GM12878 (cell line): ENCODE measurements at regions of chr14 and their contacts with region 1.

Region 1: DNA sequence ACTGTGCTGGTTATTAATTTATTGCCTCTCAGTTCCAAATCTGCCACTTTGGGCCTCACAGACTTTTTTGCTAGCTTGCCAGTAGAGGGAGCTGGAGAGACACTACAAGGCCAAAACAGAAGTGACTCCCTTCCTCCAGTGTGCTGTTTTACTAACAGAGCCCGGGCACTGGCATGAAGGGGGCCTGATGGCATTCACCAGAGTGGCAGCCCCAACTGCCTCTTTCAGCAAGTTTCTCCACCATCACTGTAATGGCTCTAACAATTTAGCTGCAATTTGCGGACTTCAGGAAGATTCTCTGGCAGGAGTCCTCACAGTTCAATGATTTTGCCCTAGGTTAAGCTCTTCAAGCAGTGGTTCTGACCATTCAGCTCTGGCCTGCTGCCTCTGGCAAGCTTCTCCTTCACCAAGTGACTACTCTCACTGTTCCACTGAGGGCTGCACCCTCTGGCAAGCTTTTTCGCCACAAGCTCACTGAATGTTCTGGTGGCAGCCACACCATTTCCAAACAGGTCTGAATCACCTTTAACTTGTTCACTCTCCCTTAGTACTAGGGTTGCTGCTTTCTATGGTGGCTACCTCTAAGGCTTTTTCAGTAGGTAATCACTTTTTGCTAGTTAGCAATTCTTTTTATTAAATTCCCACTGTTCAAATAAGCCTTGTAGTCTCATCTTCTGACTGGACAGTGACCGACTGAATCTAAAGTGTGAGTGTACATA is 104.9 kb downstream of the ZC3H14 start:
- DNase-seq: peak; percentile 25
- ATAC-seq: peak; percentile 89
- H3K4me3 ChIP-seq: peak overlapping the region; percentile 16; the same call in 1 of the 2 replicates
- H3K27ac ChIP-seq: peak overlapping the region; percentile 55
- H3K4me1 ChIP-seq: peaks cover 23% of the 10 kb centered on the region
- H3K27me3 ChIP-seq: no peaks in the 10 kb centered on the region
- CTCF ChIP-seq: peak; percentile 88 to 90 (median 88)
- EP300 ChIP-seq: no peak
- POLR2A ChIP-seq: no peak
- RAD21 ChIP-seq: peak; percentile 94

Region 2: DNA sequence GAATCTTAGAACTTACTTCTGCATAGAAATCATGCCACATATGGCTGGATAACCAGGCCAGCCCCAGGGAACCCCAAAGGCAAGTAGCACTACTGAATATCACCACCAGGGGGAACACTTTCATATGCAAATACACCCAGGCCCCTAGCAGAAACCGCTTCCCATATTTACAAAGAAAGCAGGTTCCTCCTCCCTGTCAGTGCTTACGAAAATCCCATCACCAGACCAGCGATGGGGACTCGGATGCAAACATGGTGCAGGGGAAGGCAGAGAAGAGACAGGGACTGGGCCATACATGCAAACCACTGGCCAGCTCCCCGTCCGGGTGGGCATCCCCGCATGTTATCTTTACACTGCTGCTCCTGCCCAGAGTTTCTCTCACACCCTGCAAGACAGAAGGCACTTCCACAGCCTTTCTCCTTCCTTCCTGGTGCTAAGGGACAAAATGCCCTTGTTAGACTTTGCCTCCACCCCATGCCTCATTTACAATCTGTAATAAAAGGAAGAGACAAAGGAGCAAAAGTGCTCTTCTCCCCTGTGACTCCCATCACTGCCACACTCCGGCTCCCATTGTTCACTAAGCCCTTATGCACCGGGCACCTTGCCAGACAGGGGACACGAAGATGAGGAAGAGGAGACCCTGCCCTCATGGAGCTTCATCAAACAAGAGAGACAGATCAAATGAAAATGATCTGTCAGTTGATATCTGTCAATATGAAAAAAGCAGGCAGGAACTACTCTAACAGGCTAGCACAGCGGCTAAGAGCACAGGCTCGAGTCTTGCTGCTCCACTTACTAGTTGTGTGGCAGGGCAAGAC is 175.2 kb before region 1 on chr14:
- CTCF ChIA-PET with region 1: interaction called, 14 read pairs
- POLR2A ChIA-PET with region 1: no interaction called
- RAD21 ChIA-PET with region 1: interaction called, 5 read pairs
- SMC1A ChIA-PET with region 1: interaction called, 4 read pairs
- in situ Hi-C with region 1: no loop called
- intact Hi-C with region 1: loop called (anchors 5 kb)
- DNase-seq: peak; percentile 19
- ATAC-seq: peak; percentile 96
- H3K4me3 ChIP-seq: no peak overlapping the region
- H3K27ac ChIP-seq: no peak overlapping the region
- H3K4me1 ChIP-seq: no peaks in the 10 kb centered on the region
- H3K27me3 ChIP-seq: no peaks in the 10 kb centered on the region; a peak in 1 of 4 replicates
- CTCF ChIP-seq: peak; percentile 72 to 85 (median 75)
- EP300 ChIP-seq: no peak
- POLR2A ChIP-seq: no peak
- RAD21 ChIP-seq: peak; percentile 70

Region 3: GRCh38 chr14:88546621-88547387 is 120.9 kb before region 1 on chr14:
- CTCF ChIA-PET with region 1: no interaction called
- POLR2A ChIA-PET with region 1: no interaction called
- RAD21 ChIA-PET with region 1: no interaction called
- SMC1A ChIA-PET with region 1: no interaction called
- in situ Hi-C with region 1: no loop called
- intact Hi-C with region 1: no loop called
- DNase-seq: no peak
- ATAC-seq: no peak
- H3K4me3 ChIP-seq: no peak overlapping the region
- H3K27ac ChIP-seq: no peak overlapping the region
- H3K4me1 ChIP-seq: no peaks in the 10 kb centered on the region
- H3K27me3 ChIP-seq: peaks cover 0 to 2% of the 10 kb centered on the region in 2 experiments; a peak in 3 of 4 replicates
- CTCF ChIP-seq: no peak
- EP300 ChIP-seq: no peak
- POLR2A ChIP-seq: no peak
- RAD21 ChIP-seq: no peak

Region 4: GRCh38 chr14:88682495-88683114 is 14.9 kb after region 1 on chr14:
- CTCF ChIA-PET with region 1: interaction called, 88 read pairs
- POLR2A ChIA-PET with region 1: interaction called, 20 read pairs
- RAD21 ChIA-PET with region 1: interaction called, 63 read pairs
- SMC1A ChIA-PET with region 1: interaction called, 85 read pairs
- in situ Hi-C with region 1: no loop called
- intact Hi-C with region 1: no loop called
- DNase-seq: no peak
- ATAC-seq: peak; percentile 88
- H3K4me3 ChIP-seq: no peak overlapping the region
- H3K27ac ChIP-seq: no peak overlapping the region
- H3K4me1 ChIP-seq: no peaks in the 10 kb centered on the region
- H3K27me3 ChIP-seq: no peaks in the 10 kb centered on the region
- CTCF ChIP-seq: no peak
- EP300 ChIP-seq: no peak
- POLR2A ChIP-seq: no peak
- RAD21 ChIP-seq: no peak

Region 5: DNA sequence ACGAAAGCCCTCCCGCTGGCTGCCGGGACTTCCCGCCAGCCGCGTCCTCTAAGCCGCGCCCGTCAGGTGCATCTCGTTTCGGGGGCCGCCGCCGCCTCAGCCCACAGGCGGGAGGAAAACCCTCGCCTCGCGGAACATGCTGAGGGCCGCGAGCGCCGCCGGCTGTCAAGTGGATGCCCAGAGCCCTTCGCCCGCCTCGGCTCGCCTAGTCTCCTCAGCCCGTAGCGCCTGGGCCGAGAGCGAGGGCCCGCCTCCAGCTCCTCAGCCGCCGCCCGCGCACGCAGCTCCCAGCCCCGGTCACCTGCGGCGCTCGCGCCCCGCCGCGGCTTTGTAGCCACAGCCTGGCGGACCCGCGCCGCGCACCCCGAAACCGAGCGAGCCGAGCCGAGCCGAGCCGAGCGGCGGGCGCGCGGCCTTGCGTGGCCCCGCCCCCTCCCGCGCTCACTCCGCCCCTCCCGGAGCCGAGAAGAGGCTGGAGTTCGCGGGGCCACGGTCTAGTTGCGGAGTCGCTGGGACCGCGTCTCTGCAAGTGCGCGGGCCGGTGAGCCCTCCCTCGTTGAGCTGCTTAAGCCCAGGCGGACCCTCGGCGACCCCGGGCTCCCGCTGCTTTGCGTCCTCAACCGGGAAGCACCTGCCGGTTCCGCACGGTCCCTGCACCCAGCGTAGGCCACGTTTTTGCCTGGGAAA is 125.0 kb after region 1 on chr14 and contains the start of gene EML5:
- CTCF ChIA-PET with region 1: interaction called, 9 read pairs
- POLR2A ChIA-PET with region 1: no interaction called
- RAD21 ChIA-PET with region 1: interaction called, 4 read pairs
- SMC1A ChIA-PET with region 1: interaction called, 4 read pairs
- in situ Hi-C with region 1: no loop called
- intact Hi-C with region 1: loop called (anchors 5 kb)
- DNase-seq: no peak
- ATAC-seq: peak; percentile 95
- H3K4me3 ChIP-seq: peak within 1 kb of the TSS; percentile 71
- H3K27ac ChIP-seq: no peak within 1 kb of the TSS
- H3K4me1 ChIP-seq: no peaks in the 10 kb centered on the region; the same call in 1 of the 2 replicates
- H3K27me3 ChIP-seq: peaks cover 2 to 13% of the 10 kb centered on the region in 2 experiments; a peak in 3 of 4 replicates
- CTCF ChIP-seq: peak; percentile 11 to 19 (median 18); a peak in 1 of 6 replicates
- EP300 ChIP-seq: no peak
- POLR2A ChIP-seq: peak; percentile 57; the same call in 1 of the 2 replicates
- RAD21 ChIP-seq: no peak
- polyA plus RNA-seq, gene EML5: 0.08 to 0.11 TPM

Region 6: GRCh38 chr14:88868558-88869159 is 200.9 kb after region 1 on chr14:
- CTCF ChIA-PET with region 1: interaction called, 45 read pairs
- POLR2A ChIA-PET with region 1: interaction called, 4 read pairs
- RAD21 ChIA-PET with region 1: interaction called, 26 read pairs
- SMC1A ChIA-PET with region 1: interaction called, 32 read pairs
- in situ Hi-C with region 1: no loop called
- intact Hi-C with region 1: loop called (anchors 1 kb)
- DNase-seq: no peak
- ATAC-seq: peak; percentile 74
- H3K4me3 ChIP-seq: no peak overlapping the region
- H3K27ac ChIP-seq: no peak overlapping the region
- H3K4me1 ChIP-seq: no peaks in the 10 kb centered on the region
- H3K27me3 ChIP-seq: no peaks in the 10 kb centered on the region
- CTCF ChIP-seq: peak; percentile 27 to 47 (median 35); a peak in 4 of 6 replicates
- EP300 ChIP-seq: no peak
- POLR2A ChIP-seq: no peak
- RAD21 ChIP-seq: peak; percentile 75

Region 7: DNA sequence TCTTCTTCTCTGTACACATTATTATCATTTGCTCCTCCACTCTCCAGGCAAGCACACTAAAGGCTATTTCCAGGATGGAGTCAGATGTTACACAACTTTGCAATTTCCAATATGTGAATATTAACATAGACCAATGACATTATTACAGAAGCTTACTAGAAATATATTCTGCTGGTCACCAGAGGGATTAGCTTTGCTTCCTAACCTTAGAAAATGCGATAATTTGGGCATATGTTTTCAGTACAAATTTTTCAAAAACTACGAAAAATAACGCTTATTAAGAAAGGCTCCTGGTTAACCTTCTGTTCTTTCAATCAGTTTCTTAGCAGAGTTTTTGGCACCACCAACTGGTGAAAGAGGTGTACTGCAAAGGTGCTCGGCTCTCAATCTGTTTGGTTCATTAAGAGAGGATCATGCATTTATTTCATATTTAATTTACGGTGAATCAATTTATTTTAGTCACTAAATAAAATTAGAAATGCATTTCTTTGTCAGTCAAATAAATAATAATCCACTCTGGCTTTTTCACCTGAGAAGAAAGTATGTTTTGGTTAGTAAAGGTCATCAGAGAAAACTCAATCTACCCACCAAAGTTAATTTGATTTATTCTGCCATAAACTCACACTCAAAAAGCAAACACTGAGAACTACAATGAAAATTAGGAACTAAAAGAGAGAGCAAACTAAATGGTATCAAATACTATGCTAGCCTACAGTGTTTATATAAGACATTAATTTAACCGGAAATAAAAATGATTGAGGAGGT is 1247.6 kb after region 1 on chr14:
- CTCF ChIA-PET with region 1: interaction called, 3 read pairs
- POLR2A ChIA-PET with region 1: no interaction called
- RAD21 ChIA-PET with region 1: no interaction called
- SMC1A ChIA-PET with region 1: no interaction called
- in situ Hi-C with region 1: no loop called
- intact Hi-C with region 1: loop called (anchors 5 kb)
- DNase-seq: peak; percentile 25
- ATAC-seq: peak; percentile 75
- H3K4me3 ChIP-seq: no peak overlapping the region
- H3K27ac ChIP-seq: no peak overlapping the region
- H3K4me1 ChIP-seq: no peaks in the 10 kb centered on the region
- H3K27me3 ChIP-seq: no peaks in the 10 kb centered on the region
- CTCF ChIP-seq: peak; percentile 85 to 92 (median 87)
- EP300 ChIP-seq: no peak
- POLR2A ChIP-seq: no peak
- RAD21 ChIP-seq: peak; percentile 96